Activated T-helper 1 cell treated with anti-CD3 and anti-CD28 coated beads, Interleukin-12 subunit alpha, Interleukin-12 subunit beta, Interleukin-2, Interleukin-4 antibody, amounts not matched to agents 30 ng/mL and 10 ng/mL and 1 ng/mL, durations not matched to agents 14 hours and 24 hours and 36 hours (primary cell): ENCODE measurements at regions of chr4 and their contacts with region 1.

Region 1: GRCh38 chr4:185395956-185396723 is 416 bp upstream of the LRP2BP start:
- DNase-seq: peak; percentile 98
- H3K4me3 Mint-ChIP-seq: peak overlapping the region; percentile 94
- H3K27ac Mint-ChIP-seq: peak overlapping the region; percentile 97
- H3K4me1 Mint-ChIP-seq: peaks cover 69% of the 10 kb centered on the region
- H3K27me3 Mint-ChIP-seq: peaks cover 2% of the 10 kb centered on the region

Region 2: GRCh38 chr4:184978211-184978610 is 417.9 kb before region 1 on chr4:
- intact Hi-C with region 1: no loop called
- DNase-seq: no peak
- H3K4me3 Mint-ChIP-seq: no peak overlapping the region
- H3K27ac Mint-ChIP-seq: no peak overlapping the region
- H3K4me1 Mint-ChIP-seq: no peaks in the 10 kb centered on the region
- H3K27me3 Mint-ChIP-seq: peaks cover 14% of the 10 kb centered on the region

Region 3: DNA sequence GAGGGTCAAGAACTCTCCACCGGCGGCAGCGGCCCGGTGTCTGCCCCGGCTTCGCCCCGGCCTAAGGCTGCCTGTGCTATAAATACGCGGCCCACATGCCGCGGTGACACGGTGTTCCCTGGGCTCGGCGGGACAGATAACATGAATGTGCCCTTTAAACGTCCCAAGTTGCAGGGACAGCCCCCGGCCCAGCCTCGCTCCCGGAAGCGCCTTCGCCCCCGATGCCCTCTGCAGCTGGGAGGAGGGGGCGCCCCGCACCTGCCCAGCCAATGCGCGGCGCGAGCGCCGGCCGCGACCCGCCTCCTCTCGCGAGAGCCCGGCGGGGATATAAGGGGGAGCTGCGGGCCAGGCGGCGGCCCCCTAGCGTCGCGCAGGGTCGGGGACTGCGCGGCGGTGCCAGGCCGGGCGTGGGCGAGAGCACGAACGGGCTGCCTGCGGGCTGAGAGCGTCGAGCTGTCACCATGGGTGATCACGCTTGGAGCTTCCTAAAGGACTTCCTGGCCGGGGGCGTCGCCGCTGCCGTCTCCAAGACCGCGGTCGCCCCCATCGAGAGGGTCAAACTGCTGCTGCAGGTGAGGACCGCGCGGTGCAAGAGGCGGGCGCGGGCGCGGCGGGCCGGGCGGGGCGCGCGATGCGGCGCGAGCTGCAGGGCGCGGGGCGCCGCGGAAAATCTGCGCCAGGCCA is 253.1 kb before region 1 on chr4 and contains the start of gene SLC25A4:
- intact Hi-C with region 1: loop called (anchors 2 kb)
- DNase-seq: peak; percentile 56
- H3K4me3 Mint-ChIP-seq: peak within 1 kb of the TSS; percentile 82
- H3K27ac Mint-ChIP-seq: no peak within 1 kb of the TSS
- H3K4me1 Mint-ChIP-seq: peaks cover 12% of the 10 kb centered on the region
- H3K27me3 Mint-ChIP-seq: peaks cover 71% of the 10 kb centered on the region
- total RNA-seq, gene SLC25A4: 2.3 and 2.7 TPM in 2 replicates

Region 4: DNA sequence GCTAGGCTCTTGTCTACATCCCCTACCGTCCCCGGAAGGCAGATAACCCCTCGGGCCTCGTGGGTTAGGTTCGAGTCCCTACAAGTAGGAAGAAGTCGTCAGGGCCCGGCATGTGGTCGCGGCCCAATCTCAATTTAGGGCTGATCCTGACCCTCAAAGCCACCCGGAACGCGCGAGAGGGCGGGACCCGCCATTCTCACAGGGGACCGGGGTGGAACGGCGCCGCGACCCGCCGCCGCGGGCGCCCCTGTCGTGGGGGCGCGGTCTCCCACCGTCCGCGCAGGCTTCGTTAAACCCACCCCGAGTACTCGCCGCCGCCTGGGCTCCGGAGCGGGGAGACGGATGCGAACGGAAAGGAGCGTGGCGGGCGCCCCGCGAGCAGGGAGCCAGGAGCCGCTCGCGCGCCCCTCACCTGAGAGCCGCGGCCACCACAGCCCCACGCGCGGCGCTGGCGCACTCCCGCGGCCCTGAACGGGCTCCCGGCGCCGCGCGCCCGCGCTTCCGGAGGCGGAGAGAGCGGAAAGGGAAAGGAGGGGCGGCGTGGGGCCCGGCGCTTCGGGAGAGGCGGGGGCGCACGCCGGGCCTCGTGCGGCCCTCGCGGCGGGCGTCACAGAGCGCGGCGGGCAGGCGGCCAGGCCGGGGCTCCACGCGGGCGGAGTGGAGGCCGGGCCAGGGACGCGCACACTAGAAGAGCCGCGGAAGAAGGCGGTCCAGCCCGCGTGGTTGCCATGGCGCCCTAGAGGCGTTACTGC is 192.5 kb before region 1 on chr4 and contains the start of gene CFAP97:
- intact Hi-C with region 1: loop called (anchors 1 kb)
- DNase-seq: peak; percentile 75
- H3K4me3 Mint-ChIP-seq: peak within 1 kb of the TSS; percentile 99
- H3K27ac Mint-ChIP-seq: peak within 1 kb of the TSS; percentile 100
- H3K4me1 Mint-ChIP-seq: peaks cover 36% of the 10 kb centered on the region
- H3K27me3 Mint-ChIP-seq: peaks cover 1% of the 10 kb centered on the region
- total RNA-seq, gene CFAP97: 52.4 and 54.6 TPM in 2 replicates

Region 5: DNA sequence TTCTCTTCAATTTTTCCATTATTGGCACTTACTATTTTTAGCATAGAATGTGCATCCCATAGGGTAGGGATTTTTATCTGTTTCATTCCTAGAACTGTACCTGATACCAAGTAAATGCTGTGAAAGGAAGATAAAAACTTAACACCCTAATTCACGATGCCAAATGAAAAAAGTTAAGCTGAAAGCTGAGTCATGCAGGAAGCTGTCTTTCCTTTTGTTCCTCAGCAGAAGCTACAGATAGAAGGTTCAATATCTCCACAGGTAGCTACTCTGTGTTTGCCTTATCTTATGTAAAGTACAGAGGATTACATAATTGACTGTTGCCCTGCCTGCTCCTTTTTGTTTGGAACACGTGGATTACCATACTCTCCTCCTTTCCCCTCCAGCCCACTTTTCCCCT is 77.5 kb before region 1 on chr4:
- intact Hi-C with region 1: loop called (anchors 2 kb)
- DNase-seq: no peak
- H3K4me3 Mint-ChIP-seq: peak overlapping the region; percentile 25
- H3K27ac Mint-ChIP-seq: peak overlapping the region; percentile 55
- H3K4me1 Mint-ChIP-seq: peaks cover 9% of the 10 kb centered on the region
- H3K27me3 Mint-ChIP-seq: no peaks in the 10 kb centered on the region

Region 6: DNA sequence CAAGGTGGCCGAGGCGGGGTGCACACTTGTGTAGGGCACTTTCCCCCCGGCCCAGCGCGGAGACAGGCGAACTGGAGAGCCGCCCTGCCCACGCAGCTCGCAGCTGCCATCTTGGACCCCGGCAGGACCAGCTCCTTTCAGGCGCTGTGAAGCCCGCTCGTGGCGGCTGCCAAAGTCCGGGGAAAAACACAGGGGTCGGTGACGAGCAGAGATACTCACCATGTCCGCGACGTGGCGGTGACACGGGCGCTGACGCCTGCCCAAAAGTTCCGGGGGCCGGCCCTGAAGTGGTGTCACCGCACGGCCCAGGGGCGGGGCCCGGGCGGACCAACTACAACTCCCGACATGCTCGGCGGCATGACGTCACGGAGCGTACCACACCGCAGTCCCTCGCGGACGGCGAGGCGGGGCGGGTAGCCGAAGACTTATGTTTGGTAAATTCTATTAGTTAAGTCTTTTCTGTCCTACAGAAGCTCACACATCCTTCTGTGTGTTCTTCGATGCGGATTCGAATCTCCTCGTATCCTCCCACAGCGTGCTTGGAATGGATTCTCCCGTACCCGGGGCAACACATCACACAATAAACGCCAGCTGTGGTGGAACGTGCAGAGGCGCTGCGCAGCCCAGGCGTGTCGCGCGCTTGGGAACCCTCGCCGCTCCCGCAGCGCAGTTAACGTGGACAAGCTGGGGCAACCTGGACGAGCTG is 29.7 kb after region 1 on chr4 and contains the start of gene UFSP2:
- intact Hi-C with region 1: loop called (anchors 1 kb)
- DNase-seq: peak; percentile 86
- H3K4me3 Mint-ChIP-seq: peak within 1 kb of the TSS; percentile 88
- H3K27ac Mint-ChIP-seq: peak within 1 kb of the TSS; percentile 92
- H3K4me1 Mint-ChIP-seq: peaks cover 35% of the 10 kb centered on the region
- H3K27me3 Mint-ChIP-seq: peaks cover 7% of the 10 kb centered on the region
- total RNA-seq, gene UFSP2: 19.8 and 19.9 TPM in 2 replicates

Region 7: DNA sequence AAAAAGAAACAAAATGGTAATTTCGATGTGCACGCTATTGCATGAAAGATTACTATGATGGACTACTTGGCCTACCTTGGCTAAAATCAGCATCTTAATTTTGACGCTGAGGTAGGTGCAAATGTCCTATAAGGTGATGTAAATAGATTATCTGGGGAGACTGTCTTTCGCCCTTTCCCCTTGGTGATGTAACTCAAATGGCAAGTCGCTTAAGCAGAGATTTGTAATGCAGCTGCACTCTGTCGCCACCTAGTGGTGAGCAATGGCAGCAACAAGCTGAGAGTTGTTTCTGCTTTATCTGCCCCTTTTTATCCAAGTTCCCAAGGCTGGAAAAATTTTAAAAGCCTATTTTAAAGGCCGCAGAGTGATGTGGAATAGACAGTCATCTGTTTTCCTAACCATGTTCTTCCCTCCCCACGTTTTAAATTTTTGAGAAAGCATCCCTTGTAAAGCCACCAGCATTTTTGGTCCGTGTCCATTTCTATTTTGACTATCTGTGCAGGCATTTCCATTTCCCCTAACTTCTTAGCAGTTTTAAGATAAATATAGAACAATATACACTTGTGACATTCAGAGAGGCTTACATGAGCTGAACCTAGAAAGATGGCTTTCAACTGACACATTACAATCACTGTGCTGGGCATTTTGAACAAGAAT is 201.5 kb after region 1 on chr4:
- intact Hi-C with region 1: loop called (anchors 1 kb)
- DNase-seq: peak; percentile 32
- H3K4me3 Mint-ChIP-seq: no peak overlapping the region
- H3K27ac Mint-ChIP-seq: no peak overlapping the region
- H3K4me1 Mint-ChIP-seq: no peaks in the 10 kb centered on the region
- H3K27me3 Mint-ChIP-seq: peaks cover 13% of the 10 kb centered on the region

Region 8: DNA sequence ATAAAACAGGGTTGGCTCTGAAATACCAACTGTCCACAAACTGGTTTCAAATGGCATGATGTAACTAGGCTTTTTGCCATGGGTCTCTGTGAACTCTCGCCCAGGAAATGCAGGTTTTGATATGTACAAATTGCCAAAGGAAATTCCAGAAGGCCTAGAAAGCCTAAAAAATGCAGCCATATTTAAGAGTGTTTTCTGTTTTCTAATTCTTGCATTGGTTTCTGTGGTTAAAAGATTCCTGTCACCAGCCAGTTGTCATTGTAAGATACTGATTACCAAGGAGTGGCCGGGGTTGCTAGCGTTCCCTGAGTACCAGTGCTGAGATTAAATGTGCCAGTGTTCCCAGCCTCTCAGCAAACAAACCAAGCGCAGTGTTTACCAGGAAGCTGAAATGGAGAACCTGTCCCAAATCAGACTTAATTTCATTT is 469.8 kb after region 1 on chr4:
- intact Hi-C with region 1: no loop called
- DNase-seq: no peak
- H3K4me3 Mint-ChIP-seq: no peak overlapping the region
- H3K27ac Mint-ChIP-seq: no peak overlapping the region
- H3K4me1 Mint-ChIP-seq: no peaks in the 10 kb centered on the region
- H3K27me3 Mint-ChIP-seq: no peaks in the 10 kb centered on the region